ENCODE measurements at regions of chr14 and their contacts with region 1.

Region 1: GRCh38 chr14:96538097-96538989 is 36.2 kb downstream of the PAPOLA start:
- DNase-seq: no peak
- ATAC-seq: no peak

Region 2: DNA sequence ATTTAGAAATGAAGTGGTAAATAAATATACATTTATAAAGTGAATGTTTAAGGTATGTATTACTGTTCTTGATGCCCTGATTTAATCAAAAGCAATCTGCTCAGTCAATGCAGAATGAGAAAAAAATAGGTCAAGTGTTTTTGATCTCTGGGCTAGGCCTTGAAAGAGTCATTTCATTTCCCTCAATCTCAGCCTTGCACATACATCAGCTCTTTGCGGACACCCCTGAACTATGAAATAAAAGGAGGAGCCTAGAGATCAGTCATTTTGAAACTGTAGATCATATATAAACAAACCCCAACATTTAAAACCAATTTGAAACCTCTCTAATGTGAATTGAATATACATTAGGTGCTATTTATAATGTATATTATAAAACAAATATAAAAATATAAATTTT is 217.7 kb before region 1 on chr14:
- intact Hi-C with region 1: loop called in 1 of 2 experiments (anchors 10 kb)
- DNase-seq: no peak
- ATAC-seq: no peak

Measured in left cardiac atrium (tissue), 4 donors.